ENCODE measurements at regions of chr13 and their contacts with region 1.

Region 1: GRCh38 chr13:101757446-101758039 is 305.1 kb downstream of the ITGBL1 start:
- DNase-seq: no peak
- H3K4me3 ChIP-seq: no peak overlapping the region
- H3K27ac ChIP-seq: no peak overlapping the region
- H3K27me3 ChIP-seq: no peaks in the 10 kb centered on the region
- CTCF ChIP-seq: peak; percentile 46

Region 2: GRCh38 chr13:101514788-101515187 is 242.8 kb before region 1 on chr13:
- in situ Hi-C with region 1: loop called (anchors 25 kb)
- DNase-seq: peak; percentile 62
- H3K4me3 ChIP-seq: no peak overlapping the region
- H3K27ac ChIP-seq: no peak overlapping the region
- H3K27me3 ChIP-seq: no peaks in the 10 kb centered on the region
- CTCF ChIP-seq: peak; percentile 71

Region 3: GRCh38 chr13:102386461-102386860 is 628.9 kb after region 1 on chr13:
- in situ Hi-C with region 1: no loop called
- DNase-seq: no peak
- H3K4me3 ChIP-seq: no peak overlapping the region
- H3K27ac ChIP-seq: no peak overlapping the region
- H3K27me3 ChIP-seq: no peaks in the 10 kb centered on the region
- CTCF ChIP-seq: no peak